CD4-positive, alpha-beta memory T cell (primary cell): ENCODE measurements at regions of chr2 and their contacts with region 1.

Region 1: GRCh38 chr2:71068218-71069035 is at the start of gene NAGK:
- DNase-seq: peak; percentile 98 to 100 (median 99)
- H3K4me3 ChIP-seq: peak within 1 kb of the TSS; percentile 90 to 96
- H3K4me3 Mint-ChIP-seq: peak within 1 kb of the TSS; percentile 95 to 98 (median 97)
- H3K27ac ChIP-seq: peak within 1 kb of the TSS; percentile 94
- H3K27ac Mint-ChIP-seq: peak within 1 kb of the TSS; percentile 97 to 100 (median 99)
- H3K4me1 ChIP-seq: peaks cover 58% of the 10 kb centered on the region
- H3K4me1 Mint-ChIP-seq: peaks cover 42 to 69% (median 53%) of the 10 kb centered on the region in 4 donors
- H3K27me3 ChIP-seq: no peaks in the 10 kb centered on the region
- H3K27me3 Mint-ChIP-seq: no peaks in the 10 kb centered on the region
- total RNA-seq, gene NAGK: 161 to 167 TPM

Region 2: GRCh38 chr2:71000780-71001591 is 67.4 kb before region 1 on chr2:
- CTCF ChIA-PET with region 1: interaction called, 13 read pairs
- POLR2A ChIA-PET with region 1: interaction called, 6 read pairs
- intact Hi-C with region 1: no loop called
- DNase-seq: peak; percentile 76 to 78 (median 76)
- H3K4me3 ChIP-seq: peak overlapping the region in 1 of 2 donors; percentile 13
- H3K4me3 Mint-ChIP-seq: peak overlapping the region; percentile 23 to 75 (median 58)
- H3K27ac ChIP-seq: no peak overlapping the region
- H3K27ac Mint-ChIP-seq: peak overlapping the region in 5 of 7 donors; percentile 24 to 85 (median 66)
- H3K4me1 ChIP-seq: peaks cover 15% of the 10 kb centered on the region
- H3K4me1 Mint-ChIP-seq: peaks cover 4 to 13% (median 11%) of the 10 kb centered on the region in 4 donors
- H3K27me3 ChIP-seq: no peaks in the 10 kb centered on the region
- H3K27me3 Mint-ChIP-seq: peaks cover 1 to 2% of the 10 kb centered on the region in 2 donors

Region 3: DNA sequence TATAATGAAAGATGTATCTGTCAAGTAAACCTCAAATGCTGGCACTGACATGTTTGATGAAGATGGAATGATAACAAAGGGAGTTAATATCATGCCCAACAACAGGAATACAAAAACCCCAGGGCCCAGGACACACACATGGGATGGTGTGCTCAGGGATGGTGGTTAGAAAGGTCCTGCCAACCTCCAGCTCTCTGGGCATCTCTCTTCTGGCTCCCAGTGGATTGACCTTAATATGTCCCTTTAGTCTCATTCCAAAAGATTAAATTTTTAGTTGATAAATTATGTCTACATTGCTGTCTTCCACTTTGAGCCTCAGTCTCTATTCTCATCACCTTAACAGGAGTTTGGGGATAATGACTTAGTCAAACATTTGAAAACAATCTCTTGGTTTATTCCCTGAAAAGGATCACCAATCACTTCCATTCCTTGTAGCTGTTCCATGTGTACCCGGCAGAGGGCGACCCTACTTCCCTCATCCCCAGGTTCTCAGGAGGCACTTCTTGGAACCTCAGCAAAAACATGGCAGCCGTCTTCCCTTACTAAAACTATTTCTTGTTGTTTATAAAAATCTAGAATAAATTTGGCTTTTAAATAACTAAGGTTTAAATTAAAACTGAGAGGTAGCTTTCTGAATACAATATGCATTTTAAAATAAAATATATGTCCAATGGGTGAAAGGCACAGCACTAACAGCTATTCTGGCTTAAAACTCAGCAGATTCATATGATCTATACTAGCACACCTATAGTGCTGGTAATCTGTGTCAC is 32.0 kb after region 1 on chr2:
- CTCF ChIA-PET with region 1: interaction called, 24 read pairs
- POLR2A ChIA-PET with region 1: interaction called, 17 read pairs
- intact Hi-C with region 1: no loop called
- DNase-seq: peak; percentile 6 to 55 (median 19)
- H3K4me3 ChIP-seq: no peak overlapping the region
- H3K4me3 Mint-ChIP-seq: no peak overlapping the region
- H3K27ac ChIP-seq: no peak overlapping the region
- H3K27ac Mint-ChIP-seq: no peak overlapping the region
- H3K4me1 ChIP-seq: no peaks in the 10 kb centered on the region
- H3K4me1 Mint-ChIP-seq: peaks cover 0 to 2% (median 0%) of the 10 kb centered on the region in 4 donors
- H3K27me3 ChIP-seq: no peaks in the 10 kb centered on the region
- H3K27me3 Mint-ChIP-seq: peaks cover 0 to 4% of the 10 kb centered on the region in 2 donors

Region 4: GRCh38 chr2:71226965-71227560 is 158.6 kb after region 1 on chr2 and contains the start of gene PAIP2B:
- CTCF ChIA-PET with region 1: no interaction called
- POLR2A ChIA-PET with region 1: interaction called, 22 read pairs
- intact Hi-C with region 1: loop called (anchors 1 kb)
- DNase-seq: peak; percentile 97 to 99 (median 99)
- H3K4me3 ChIP-seq: peak within 1 kb of the TSS; percentile 68 to 71
- H3K4me3 Mint-ChIP-seq: peak within 1 kb of the TSS; percentile 92 to 99 (median 98)
- H3K27ac ChIP-seq: peak within 1 kb of the TSS; percentile 53
- H3K27ac Mint-ChIP-seq: peak within 1 kb of the TSS; percentile 89 to 99 (median 96)
- H3K4me1 ChIP-seq: peaks cover 12% of the 10 kb centered on the region
- H3K4me1 Mint-ChIP-seq: peaks cover 16 to 33% (median 20%) of the 10 kb centered on the region in 4 donors
- H3K27me3 ChIP-seq: no peaks in the 10 kb centered on the region
- H3K27me3 Mint-ChIP-seq: peaks cover 6 to 10% of the 10 kb centered on the region in 2 donors
- total RNA-seq, gene PAIP2B: 9.9 to 11.0 TPM

Region 5: DNA sequence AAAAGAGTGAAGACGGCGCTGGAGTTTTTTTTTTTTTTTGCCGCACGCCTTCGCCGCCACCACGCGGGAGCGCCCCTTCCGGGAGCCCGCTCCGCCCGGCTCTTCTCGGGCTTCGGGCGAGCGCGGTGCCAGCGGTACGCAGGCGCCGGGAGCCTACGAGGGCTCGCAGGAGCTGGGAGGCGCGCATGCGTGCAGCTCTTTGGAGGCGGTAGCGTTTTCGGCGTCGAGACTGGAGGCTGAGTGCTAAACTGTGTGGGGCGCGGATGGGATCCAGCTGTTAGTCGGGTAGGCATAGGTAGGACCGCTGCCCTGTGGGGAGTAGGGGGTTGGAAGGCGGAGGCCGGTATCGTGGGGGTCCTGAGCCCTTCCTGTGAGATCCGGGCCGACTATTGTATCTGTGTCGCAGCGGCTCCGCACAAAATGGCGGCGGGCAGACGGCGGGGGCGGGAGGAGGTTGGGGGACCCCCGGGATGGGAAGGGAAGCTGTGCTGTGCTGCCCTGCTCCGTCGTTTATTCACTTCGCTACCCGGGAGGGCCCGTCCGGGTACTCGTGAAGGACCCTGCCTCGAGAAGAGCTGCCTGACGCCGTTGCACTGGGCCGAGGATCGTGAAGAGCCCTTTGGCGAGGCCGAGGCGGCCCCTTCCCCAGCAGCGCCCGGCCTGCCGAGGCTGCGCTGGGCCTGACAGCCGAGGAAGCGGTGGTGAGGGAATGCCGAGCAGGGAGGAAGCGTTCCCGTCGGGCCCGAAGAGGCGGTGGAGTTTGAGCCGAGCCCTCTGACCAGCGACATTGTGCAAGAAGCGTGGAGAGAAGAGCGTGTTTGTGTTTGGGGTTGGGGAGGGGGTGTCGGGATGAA is 263.4 kb after region 1 on chr2 and contains the start of gene ZNF638:
- CTCF ChIA-PET with region 1: interaction called, 7 read pairs
- POLR2A ChIA-PET with region 1: interaction called, 15 read pairs
- intact Hi-C with region 1: loop called (anchors 5 kb)
- DNase-seq: peak; percentile 92 to 94 (median 93)
- H3K4me3 ChIP-seq: peak within 1 kb of the TSS; percentile 70 to 76
- H3K4me3 Mint-ChIP-seq: peak within 1 kb of the TSS; percentile 98 to 100 (median 100)
- H3K27ac ChIP-seq: peak within 1 kb of the TSS; percentile 95
- H3K27ac Mint-ChIP-seq: peak within 1 kb of the TSS; percentile 98 to 100 (median 100)
- H3K4me1 ChIP-seq: peaks cover 51% of the 10 kb centered on the region
- H3K4me1 Mint-ChIP-seq: peaks cover 23 to 53% (median 35%) of the 10 kb centered on the region in 4 donors
- H3K27me3 ChIP-seq: no peaks in the 10 kb centered on the region
- H3K27me3 Mint-ChIP-seq: no peaks in the 10 kb centered on the region
- total RNA-seq, gene ZNF638: 167 TPM